ENCODE measurements at regions of chr2 and their contacts with region 1.

Region 1: GRCh38 chr2:159818940-159819339 is 20.9 kb upstream of the CD302 start:
- DNase-seq: no peak
- ATAC-seq: no peak
- H3K4me3 ChIP-seq: no peak overlapping the region
- H3K4me3 Mint-ChIP-seq: no peak overlapping the region
- H3K27ac ChIP-seq: no peak overlapping the region
- H3K27ac Mint-ChIP-seq: no peak overlapping the region
- H3K4me1 ChIP-seq: no peaks in the 10 kb centered on the region
- H3K4me1 Mint-ChIP-seq: no peaks in the 10 kb centered on the region
- H3K27me3 ChIP-seq: no peaks in the 10 kb centered on the region
- H3K27me3 Mint-ChIP-seq: no peaks in the 10 kb centered on the region
- CTCF ChIP-seq: no peak

Region 2: DNA sequence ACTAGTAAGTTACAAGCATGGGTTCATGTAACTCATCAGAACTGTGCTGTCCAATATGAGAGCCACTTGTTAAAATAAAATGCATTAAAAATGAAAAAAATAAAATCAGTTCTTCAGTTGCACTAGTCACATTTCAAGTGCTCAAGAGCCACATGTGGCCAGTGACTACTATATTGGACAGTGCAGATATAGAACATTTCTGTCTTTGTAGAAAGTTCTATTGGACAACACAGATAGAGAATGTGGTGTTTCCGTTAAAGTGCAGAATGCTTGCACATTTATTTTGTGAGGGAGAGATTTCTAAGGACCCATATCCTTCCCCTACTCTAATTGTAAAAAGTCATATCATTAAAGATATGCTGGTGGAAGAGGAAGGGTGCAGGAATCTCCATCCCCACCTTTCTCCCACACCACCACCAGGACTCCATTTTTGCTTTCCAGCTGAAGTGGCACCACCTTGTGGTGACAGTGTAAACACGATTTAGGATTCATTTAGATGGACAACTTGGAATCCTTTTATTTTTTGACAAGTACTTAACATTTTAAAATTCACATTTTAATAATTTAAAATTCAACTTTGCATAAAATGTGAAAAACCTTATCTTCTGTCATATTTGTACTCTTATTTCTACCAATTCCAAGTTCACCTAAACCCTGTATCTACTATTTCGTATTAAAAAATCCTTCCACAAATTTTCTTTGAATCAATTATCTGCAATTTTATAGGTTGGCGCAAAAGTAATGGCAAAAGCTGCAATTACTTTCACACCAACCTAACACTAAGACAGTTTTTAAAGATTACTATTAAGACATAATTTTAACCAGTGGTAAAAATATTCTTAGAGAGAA is 11.5 kb before region 1 on chr2:
- CTCF ChIA-PET with region 1: no interaction called
- POLR2A ChIA-PET with region 1: no interaction called
- intact Hi-C with region 1: loop called in 1 of 2 experiments (anchors 1 kb)
- DNase-seq: peak in 3 of 9 experiments; percentile 6 to 46 (median 25)
- ATAC-seq: no peak
- H3K4me3 ChIP-seq: no peak overlapping the region
- H3K4me3 Mint-ChIP-seq: no peak overlapping the region
- H3K27ac ChIP-seq: no peak overlapping the region
- H3K27ac Mint-ChIP-seq: no peak overlapping the region
- H3K4me1 ChIP-seq: no peaks in the 10 kb centered on the region
- H3K4me1 Mint-ChIP-seq: no peaks in the 10 kb centered on the region
- H3K27me3 ChIP-seq: no peaks in the 10 kb centered on the region
- H3K27me3 Mint-ChIP-seq: no peaks in the 10 kb centered on the region
- CTCF ChIP-seq: peak; percentile 27